PC-9 (cell line): ENCODE measurements at regions of chr16 and their contacts with region 1.

Region 1: GRCh38 chr16:15811481-15812400 is 45.1 kb downstream of the MYH11 start:
- DNase-seq: peak in 1 of 2 experiments; percentile 88
- H3K4me3 ChIP-seq: no peak overlapping the region
- H3K27ac ChIP-seq: no peak overlapping the region
- H3K4me1 ChIP-seq: peaks cover 6% of the 10 kb centered on the region
- H3K27me3 ChIP-seq: peaks cover 18% of the 10 kb centered on the region; the same call in 1 of the 2 replicates
- CTCF ChIP-seq: no peak

Region 2: DNA sequence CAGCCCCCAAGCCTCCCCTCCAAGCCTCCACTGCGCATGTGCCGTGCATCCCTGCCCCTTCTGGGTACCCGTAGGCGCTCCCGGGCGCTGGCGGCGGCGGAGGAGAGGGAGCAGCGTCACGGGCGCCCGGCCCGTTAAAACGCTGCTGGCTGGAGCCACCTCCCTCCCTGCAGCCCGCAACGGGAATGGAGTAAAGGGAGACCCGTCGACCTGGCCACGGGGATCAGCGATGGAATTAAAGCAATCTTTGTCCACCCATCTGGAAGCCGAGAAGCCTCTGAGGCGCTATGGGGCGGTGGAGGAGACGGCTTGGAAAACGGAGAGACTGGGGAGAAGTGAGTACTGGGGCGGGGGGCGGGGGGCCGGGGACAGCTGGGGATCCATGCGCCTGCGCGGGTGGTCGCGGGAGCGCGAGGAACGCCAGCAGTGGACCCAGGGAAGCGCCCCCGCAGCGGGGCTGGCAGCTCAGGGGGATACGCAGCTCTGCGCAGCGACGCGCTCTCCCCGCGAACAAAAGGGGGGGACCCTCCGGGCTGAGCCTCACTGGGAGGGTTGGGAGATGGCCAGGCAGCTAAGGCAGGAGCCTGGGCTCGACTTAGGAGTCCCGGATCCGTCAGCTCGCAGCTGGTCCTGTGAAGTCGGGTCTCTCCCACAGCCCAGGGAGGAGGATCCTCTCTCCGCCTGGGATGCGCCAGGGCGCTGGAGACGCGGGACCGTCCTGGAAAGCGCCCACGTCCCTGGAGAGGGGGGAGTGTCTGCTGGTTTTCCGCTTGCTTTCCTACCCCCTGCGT is 377.1 kb before region 1 on chr16 and contains the start of gene BMERB1:
- CTCF ChIA-PET with region 1: no interaction called
- POLR2A ChIA-PET with region 1: no interaction called
- intact Hi-C with region 1: no loop called
- DNase-seq: peak in 1 of 2 experiments; percentile 32
- H3K4me3 ChIP-seq: no peak within 1 kb of the TSS; the same call in 1 of the 2 replicates
- H3K27ac ChIP-seq: no peak within 1 kb of the TSS
- H3K4me1 ChIP-seq: peaks cover 8% of the 10 kb centered on the region
- H3K27me3 ChIP-seq: no peaks in the 10 kb centered on the region
- CTCF ChIP-seq: no peak
- total RNA-seq, gene BMERB1: 3.9 and 4.3 TPM in 2 replicates

Region 3: GRCh38 chr16:15836074-15836473 is 24.3 kb after region 1 on chr16:
- CTCF ChIA-PET with region 1: no interaction called
- POLR2A ChIA-PET with region 1: interaction called, 11 read pairs
- intact Hi-C with region 1: no loop called
- DNase-seq: no peak
- H3K4me3 ChIP-seq: no peak overlapping the region
- H3K27ac ChIP-seq: no peak overlapping the region
- H3K4me1 ChIP-seq: no peaks in the 10 kb centered on the region
- H3K27me3 ChIP-seq: no peaks in the 10 kb centered on the region
- CTCF ChIP-seq: no peak

Region 4: DNA sequence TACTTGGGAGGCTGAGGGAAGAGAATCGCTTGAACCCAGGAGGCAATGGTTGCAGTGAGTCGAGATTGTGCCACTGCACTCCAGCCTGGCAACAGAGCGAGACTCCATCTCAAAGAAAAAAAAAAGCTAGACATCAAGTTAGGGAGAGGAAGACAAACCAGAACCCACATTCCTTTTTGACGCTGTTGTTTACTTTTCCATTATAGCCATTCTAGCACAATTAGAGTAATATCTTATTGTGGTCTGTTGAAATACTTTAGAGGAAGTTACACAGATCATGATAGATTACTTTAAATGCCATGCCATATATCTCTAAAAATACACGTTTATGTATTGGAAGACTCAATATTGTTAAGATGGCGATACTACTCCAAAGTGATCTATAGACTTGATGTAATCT is 121.2 kb after region 1 on chr16:
- CTCF ChIA-PET with region 1: no interaction called
- POLR2A ChIA-PET with region 1: no interaction called
- intact Hi-C with region 1: no loop called
- DNase-seq: peak in 1 of 2 experiments; percentile 56
- H3K4me3 ChIP-seq: no peak overlapping the region
- H3K27ac ChIP-seq: no peak overlapping the region
- H3K4me1 ChIP-seq: peaks cover 19% of the 10 kb centered on the region
- H3K27me3 ChIP-seq: no peaks in the 10 kb centered on the region
- CTCF ChIP-seq: no peak

Region 5: DNA sequence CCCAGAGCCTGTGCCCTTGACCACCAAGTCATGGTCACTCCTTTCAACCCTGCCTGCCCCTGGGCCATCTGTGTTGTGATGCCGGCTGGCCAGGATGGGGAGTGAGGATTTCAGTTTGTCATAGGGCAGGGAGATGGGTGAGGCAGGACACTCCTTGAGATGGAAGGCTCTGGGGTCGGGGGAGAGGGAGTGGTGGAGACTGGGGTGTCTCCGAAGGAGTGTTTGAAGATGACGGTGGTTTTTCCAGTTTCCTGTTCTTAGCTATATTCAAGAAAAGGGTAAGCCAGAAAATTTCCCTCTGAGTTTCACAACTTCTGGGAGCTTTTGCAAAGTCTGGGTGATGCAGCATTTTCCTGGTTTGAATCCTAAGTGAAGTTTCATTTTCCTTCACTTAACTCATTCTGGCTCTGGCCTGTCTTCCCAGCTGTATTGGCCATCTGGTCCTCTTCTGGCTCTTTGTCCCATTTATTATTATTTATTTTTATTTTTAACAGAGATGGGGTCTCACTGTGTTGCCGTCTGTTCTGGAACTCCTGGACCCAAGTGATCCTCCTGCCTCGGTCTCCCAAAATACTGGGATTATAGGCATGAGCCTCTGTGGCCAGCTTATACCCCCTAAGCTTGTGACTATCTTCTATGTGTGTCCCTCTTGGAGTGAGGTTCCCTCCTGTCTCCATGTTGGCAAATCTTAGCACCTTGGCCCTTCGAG is 165.3 kb after region 1 on chr16:
- CTCF ChIA-PET with region 1: no interaction called
- POLR2A ChIA-PET with region 1: no interaction called
- intact Hi-C with region 1: no loop called
- DNase-seq: no peak
- H3K4me3 ChIP-seq: no peak overlapping the region
- H3K27ac ChIP-seq: peak overlapping the region; percentile 49
- H3K4me1 ChIP-seq: 0 out of 2 replicates have a peak, but pooled peaks cover 1% of the 10 kb centered on the region
- H3K27me3 ChIP-seq: no peaks in the 10 kb centered on the region
- CTCF ChIP-seq: no peak